CD8-positive, alpha-beta T cell (primary cell): ENCODE measurements at regions of chr14 and their contacts with region 1.

Region 1: GRCh38 chr14:50198499-50198898 is 32.9 kb downstream of the SOS2 start:
- DNase-seq: no peak
- ATAC-seq: no peak
- H3K4me3 ChIP-seq: no peak overlapping the region
- H3K4me3 Mint-ChIP-seq: no peak overlapping the region
- H3K27ac ChIP-seq: no peak overlapping the region
- H3K27ac Mint-ChIP-seq: no peak overlapping the region
- H3K4me1 ChIP-seq: no peaks in the 10 kb centered on the region
- H3K4me1 Mint-ChIP-seq: no peaks in the 10 kb centered on the region
- H3K27me3 ChIP-seq: no peaks in the 10 kb centered on the region
- H3K27me3 Mint-ChIP-seq: no peaks in the 10 kb centered on the region
- CTCF ChIP-seq: no peak

Region 2: GRCh38 chr14:50045039-50045711 is 153.3 kb before region 1 on chr14:
- CTCF ChIA-PET with region 1: no interaction called
- POLR2A ChIA-PET with region 1: no interaction called
- intact Hi-C with region 1: no loop called
- DNase-seq: peak; percentile 27 to 86 (median 72)
- ATAC-seq: peak; percentile 77
- H3K4me3 ChIP-seq: peak overlapping the region in 1 of 2 experiments; percentile 17
- H3K4me3 Mint-ChIP-seq: peak overlapping the region; percentile 56
- H3K27ac ChIP-seq: peak overlapping the region; percentile 63 to 89
- H3K27ac Mint-ChIP-seq: peak overlapping the region; percentile 91
- H3K4me1 ChIP-seq: peaks cover 62% of the 10 kb centered on the region
- H3K4me1 Mint-ChIP-seq: peaks cover 65% of the 10 kb centered on the region
- H3K27me3 ChIP-seq: no peaks in the 10 kb centered on the region
- H3K27me3 Mint-ChIP-seq: no peaks in the 10 kb centered on the region
- CTCF ChIP-seq: no peak

Region 3: GRCh38 chr14:50064993-50065392 is 133.5 kb before region 1 on chr14:
- CTCF ChIA-PET with region 1: no interaction called
- POLR2A ChIA-PET with region 1: no interaction called
- intact Hi-C with region 1: no loop called
- DNase-seq: peak in 7 of 9 experiments; percentile 47 to 90 (median 68)
- ATAC-seq: peak; percentile 43
- H3K4me3 ChIP-seq: no peak overlapping the region
- H3K4me3 Mint-ChIP-seq: peak overlapping the region; percentile 55
- H3K27ac ChIP-seq: peak overlapping the region; percentile 24 to 93
- H3K27ac Mint-ChIP-seq: peak overlapping the region; percentile 99
- H3K4me1 ChIP-seq: peaks cover 68% of the 10 kb centered on the region
- H3K4me1 Mint-ChIP-seq: peaks cover 69% of the 10 kb centered on the region
- H3K27me3 ChIP-seq: no peaks in the 10 kb centered on the region
- H3K27me3 Mint-ChIP-seq: no peaks in the 10 kb centered on the region
- CTCF ChIP-seq: no peak

Region 4: GRCh38 chr14:50260511-50260910 is 62.0 kb after region 1 on chr14:
- CTCF ChIA-PET with region 1: no interaction called
- POLR2A ChIA-PET with region 1: no interaction called
- intact Hi-C with region 1: loop called in 1 of 2 experiments (anchors 5 kb)
- DNase-seq: peak in 4 of 9 experiments; percentile 9 to 57 (median 30)
- ATAC-seq: peak; percentile 55
- H3K4me3 ChIP-seq: no peak overlapping the region
- H3K4me3 Mint-ChIP-seq: no peak overlapping the region
- H3K27ac ChIP-seq: no peak overlapping the region
- H3K27ac Mint-ChIP-seq: no peak overlapping the region
- H3K4me1 ChIP-seq: no peaks in the 10 kb centered on the region
- H3K4me1 Mint-ChIP-seq: no peaks in the 10 kb centered on the region
- H3K27me3 ChIP-seq: no peaks in the 10 kb centered on the region
- H3K27me3 Mint-ChIP-seq: no peaks in the 10 kb centered on the region
- CTCF ChIP-seq: peak; percentile 54